ENCODE measurements at regions of chr5 and their contacts with region 1.

Region 1: DNA sequence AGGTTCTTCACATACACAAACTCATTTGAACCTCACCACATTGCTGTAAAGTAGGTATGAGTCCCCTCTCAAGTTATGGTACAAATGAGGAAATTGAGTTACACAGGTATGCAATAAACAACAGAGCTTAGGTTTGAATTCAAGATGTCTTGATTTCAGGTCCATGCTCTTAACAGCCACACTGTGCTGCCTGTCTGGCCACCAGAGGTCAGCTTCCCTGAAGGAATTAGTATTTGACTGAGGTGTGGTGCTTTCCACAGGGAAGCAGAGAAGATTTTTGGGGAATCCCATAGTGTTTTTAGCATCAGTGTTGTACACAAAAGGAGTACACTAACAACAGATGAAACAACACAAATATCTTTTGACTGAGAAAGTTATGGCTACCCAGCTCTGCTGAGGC is 94.4 kb upstream of the ITGA1 start:
- DNase-seq: peak in 25 of 35 experiments; percentile 2 to 58 (median 19)
- ATAC-seq: peak in 2 of 4 experiments; percentile 53 to 63
- H3K4me3 ChIP-seq: no peak overlapping the region
- H3K4me3 Mint-ChIP-seq: no peak overlapping the region
- H3K27ac ChIP-seq: no peak overlapping the region
- H3K27ac Mint-ChIP-seq: no peak overlapping the region
- H3K4me1 ChIP-seq: no peaks in the 10 kb centered on the region
- H3K4me1 Mint-ChIP-seq: peaks cover 7 to 11% (median 7%) of the 10 kb centered on the region in 3 donors
- H3K27me3 ChIP-seq: no peaks in the 10 kb centered on the region
- H3K27me3 Mint-ChIP-seq: no peaks in the 10 kb centered on the region

Region 2: DNA sequence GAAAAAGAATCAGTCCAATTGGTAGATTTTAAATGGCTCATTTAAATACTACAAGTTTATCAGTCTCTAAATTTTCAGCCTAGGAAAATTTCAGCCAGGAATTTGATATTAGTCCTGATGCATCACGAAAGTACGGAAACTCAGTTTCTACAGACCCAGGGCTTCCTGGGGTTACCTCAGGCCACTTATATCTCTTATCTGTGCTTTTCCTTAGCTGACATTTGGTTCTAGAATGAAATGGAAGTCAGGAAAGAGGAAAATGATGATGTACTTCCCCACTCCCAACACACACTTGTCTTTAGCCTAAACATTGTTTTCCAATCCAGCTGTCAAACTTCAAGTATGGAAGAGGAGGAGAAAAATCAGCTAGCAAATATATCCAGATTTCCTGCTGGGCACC is 121.5 kb after region 1 on chr5:
- CTCF ChIA-PET with region 1: no interaction called
- POLR2A ChIA-PET with region 1: no interaction called
- DNase-seq: no peak
- ATAC-seq: no peak
- H3K4me3 ChIP-seq: no peak overlapping the region
- H3K4me3 Mint-ChIP-seq: no peak overlapping the region
- H3K27ac ChIP-seq: no peak overlapping the region
- H3K27ac Mint-ChIP-seq: no peak overlapping the region
- H3K4me1 ChIP-seq: no peaks in the 10 kb centered on the region
- H3K4me1 Mint-ChIP-seq: no peaks in the 10 kb centered on the region
- H3K27me3 ChIP-seq: no peaks in the 10 kb centered on the region
- H3K27me3 Mint-ChIP-seq: no peaks in the 10 kb centered on the region

Region 3: GRCh38 chr5:52915176-52915875 is 222.0 kb after region 1 on chr5:
- CTCF ChIA-PET with region 1: interaction called, 6 to 31 read pairs
- POLR2A ChIA-PET with region 1: no interaction called
- DNase-seq: peak in 31 of 35 experiments; percentile 4 to 80 (median 24)
- ATAC-seq: peak; percentile 75 to 92 (median 86)
- H3K4me3 ChIP-seq: no peak overlapping the region
- H3K4me3 Mint-ChIP-seq: peak overlapping the region; percentile 23 to 61 (median 45)
- H3K27ac ChIP-seq: no peak overlapping the region
- H3K27ac Mint-ChIP-seq: no peak overlapping the region
- H3K4me1 ChIP-seq: peaks cover 0 to 4% of the 10 kb centered on the region in 2 experiments
- H3K4me1 Mint-ChIP-seq: peaks cover 5 to 7% (median 7%) of the 10 kb centered on the region in 3 donors
- H3K27me3 ChIP-seq: no peaks in the 10 kb centered on the region
- H3K27me3 Mint-ChIP-seq: no peaks in the 10 kb centered on the region

Measured in T-cell (primary cell).